ENCODE measurements at regions of chr6 and their contacts with region 1.

Region 1: DNA sequence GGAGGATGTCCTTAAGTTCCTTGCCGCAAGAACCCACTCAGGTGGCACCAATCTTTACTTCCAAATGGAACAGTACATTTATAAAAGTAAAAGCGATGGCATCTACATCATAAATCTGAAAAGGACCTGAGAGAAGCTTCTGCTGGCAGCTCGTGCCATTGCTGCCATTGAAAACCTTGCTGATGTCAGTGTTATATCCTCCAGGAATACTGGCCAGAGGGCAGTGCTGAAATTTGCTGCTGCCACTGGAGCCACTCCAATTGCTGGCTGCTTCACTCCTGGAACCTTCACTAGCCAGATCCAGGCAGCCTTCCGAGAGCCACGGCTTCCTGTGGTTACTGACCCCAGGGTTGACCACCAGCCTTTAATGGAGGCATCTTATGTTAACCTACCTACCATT is 191.7 kb downstream of the TRIM27 start:
- DNase-seq: no peak
- H3K4me3 ChIP-seq: no peak overlapping the region
- H3K27ac ChIP-seq: no peak overlapping the region
- H3K4me1 ChIP-seq: peaks cover 0 to 6% (median 2%) of the 10 kb centered on the region in 4 donors
- H3K27me3 ChIP-seq: peaks cover 0 to 45% of the 10 kb centered on the region in 2 donors
- CTCF ChIP-seq: no peak

Region 2: DNA sequence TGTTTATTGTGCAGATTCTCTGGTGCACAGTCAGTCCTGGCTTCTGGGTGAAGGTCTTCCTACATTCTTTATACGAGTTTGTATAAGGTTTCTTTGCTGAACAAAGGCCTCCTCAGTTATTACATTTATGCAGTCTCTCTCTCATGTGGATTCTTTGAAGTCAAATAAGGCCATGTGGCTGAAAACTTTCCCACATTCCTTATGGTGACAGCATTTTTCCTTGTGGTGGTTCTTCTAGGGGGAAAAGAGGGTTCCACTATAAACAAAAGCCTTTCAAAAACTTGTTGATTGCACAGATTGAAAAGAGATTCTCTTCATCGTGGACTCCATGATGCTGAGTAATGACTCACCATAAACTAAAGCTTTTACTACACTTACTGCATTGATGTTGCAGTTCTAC is 351.7 kb before region 1 on chr6:
- intact Hi-C with region 1: no loop called
- DNase-seq: no peak
- H3K4me3 ChIP-seq: no peak overlapping the region
- H3K27ac ChIP-seq: no peak overlapping the region
- H3K4me1 ChIP-seq: peaks cover 0 to 6% (median 0%) of the 10 kb centered on the region in 4 donors
- H3K27me3 ChIP-seq: no peaks in the 10 kb centered on the region
- CTCF ChIP-seq: no peak

Region 3: DNA sequence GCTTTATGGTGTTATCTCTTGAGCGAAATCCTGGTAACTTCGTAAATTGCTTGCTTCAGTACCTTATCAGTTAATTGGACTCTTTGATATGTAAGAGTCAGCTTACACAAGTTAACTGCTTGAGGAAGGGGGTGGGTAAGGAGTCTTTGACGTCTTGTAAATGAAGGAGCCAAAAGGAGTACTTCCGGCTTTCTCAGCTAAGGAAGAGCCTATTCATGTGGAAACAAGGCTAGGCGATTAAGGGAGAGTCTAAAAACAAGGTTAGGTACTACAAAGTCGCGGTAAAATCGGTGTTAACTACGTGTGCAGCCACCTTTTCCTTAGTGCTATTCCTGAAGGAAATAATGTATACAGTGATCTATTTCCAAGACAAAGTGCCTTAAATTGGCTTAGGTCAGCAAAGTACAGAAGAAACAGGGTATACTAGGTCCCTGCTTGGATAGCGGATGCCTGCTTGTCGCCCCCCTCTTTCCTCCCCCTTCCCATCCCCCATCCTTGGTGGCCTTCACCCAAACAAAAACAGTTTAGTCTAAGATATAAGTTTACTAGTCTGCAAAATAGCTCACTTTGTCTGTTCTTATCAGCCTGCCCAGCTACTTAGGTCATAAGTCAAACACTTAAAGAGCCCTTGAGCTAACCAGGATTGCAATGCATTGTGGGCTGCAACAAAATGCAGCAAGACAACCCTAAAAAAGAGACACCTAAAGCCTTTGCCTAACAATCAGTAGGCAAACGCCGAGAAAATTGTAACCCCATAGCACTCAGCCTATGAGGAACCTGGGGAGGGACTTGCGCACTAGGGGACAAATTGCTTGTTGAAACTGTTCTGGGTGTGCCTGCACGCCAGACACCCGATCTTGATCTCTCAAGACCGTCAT is 44.5 kb after region 1 on chr6:
- intact Hi-C with region 1: loop called (anchors 2 kb)
- DNase-seq: no peak
- H3K4me3 ChIP-seq: no peak overlapping the region
- H3K27ac ChIP-seq: no peak overlapping the region
- H3K4me1 ChIP-seq: no peaks in the 10 kb centered on the region
- H3K27me3 ChIP-seq: peaks cover 0 to 86% of the 10 kb centered on the region in 2 donors
- CTCF ChIP-seq: no peak

Region 4: DNA sequence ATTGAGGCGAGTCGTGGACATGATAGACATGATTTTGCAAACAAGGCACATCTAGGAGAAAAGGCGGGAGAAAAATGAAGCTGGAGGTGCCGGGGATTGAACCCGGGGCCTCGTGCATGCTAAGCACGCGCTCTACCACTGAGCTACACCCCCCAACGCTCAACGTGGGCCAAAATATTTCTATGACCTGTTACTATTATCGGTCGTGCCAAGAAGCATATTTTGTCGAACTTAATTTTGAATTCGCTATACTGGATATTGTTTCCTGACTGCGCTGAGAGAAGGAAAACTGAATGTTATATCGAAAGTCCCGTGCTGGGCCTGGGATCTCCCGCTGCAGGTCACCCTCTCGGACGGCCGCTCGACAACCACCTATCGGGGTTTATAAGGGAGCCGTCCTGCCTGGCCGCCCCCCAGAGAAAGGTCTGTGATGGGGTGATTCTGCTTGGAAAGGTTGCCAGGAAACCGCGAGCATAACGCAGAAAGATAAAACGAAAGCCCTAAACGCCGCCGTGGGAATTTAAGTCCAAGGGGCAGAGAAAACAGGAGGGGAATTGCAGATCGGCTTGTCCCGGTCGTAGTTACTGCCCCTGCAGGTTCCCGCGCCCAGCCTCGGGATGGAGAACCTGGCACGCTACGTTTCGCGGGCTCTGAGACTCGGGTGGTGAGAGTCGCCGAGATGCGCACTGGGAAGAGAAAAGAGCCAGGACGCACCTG is 131.7 kb after region 1 on chr6:
- intact Hi-C with region 1: no loop called
- DNase-seq: peak; percentile 66 to 76
- H3K4me3 ChIP-seq: peak overlapping the region; percentile 63 to 76
- H3K27ac ChIP-seq: peak overlapping the region; percentile 65 to 75
- H3K4me1 ChIP-seq: peaks cover 0 to 17% (median 8%) of the 10 kb centered on the region in 4 donors
- H3K27me3 ChIP-seq: no peaks in the 10 kb centered on the region
- CTCF ChIP-seq: no peak